Colonic mucosa (tissue), 4 donors: ENCODE measurements at regions of chr10 and their contacts with region 1.

Region 1: DNA sequence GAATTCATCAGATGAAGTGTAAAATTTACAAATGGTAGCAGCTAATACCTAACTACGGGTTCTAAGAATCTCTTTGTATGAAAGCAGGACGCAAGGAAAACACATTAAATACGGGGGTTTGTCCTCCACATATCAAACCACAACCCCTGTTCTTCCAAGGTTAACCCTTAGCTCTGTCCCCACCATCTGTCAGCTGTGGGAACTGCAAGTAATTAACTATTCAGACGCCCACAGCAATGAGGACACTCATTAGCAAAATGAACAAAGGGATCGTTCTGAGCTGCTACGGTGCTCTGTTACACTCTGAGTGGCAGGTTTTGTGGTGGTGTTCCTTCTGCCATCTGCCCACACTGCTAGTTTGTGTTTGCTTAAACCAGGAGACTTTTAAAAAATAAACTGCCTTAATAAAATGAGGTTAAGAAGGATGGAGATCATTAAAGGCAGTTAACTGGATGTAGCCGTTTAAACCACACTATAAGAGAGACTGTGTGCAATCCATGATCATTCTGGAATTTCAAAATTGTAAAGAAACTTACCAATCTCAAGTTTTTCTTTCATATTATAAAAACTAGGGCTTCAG is 51.4 kb downstream of the C10orf67 start:
- DNase-seq: peak; percentile 27
- H3K4me3 ChIP-seq: no peak overlapping the region
- H3K27ac ChIP-seq: no peak overlapping the region
- H3K4me1 ChIP-seq: no peaks in the 10 kb centered on the region
- H3K27me3 ChIP-seq: no peaks in the 10 kb centered on the region
- CTCF ChIP-seq: no peak

Region 2: GRCh38 chr10:23158370-23158769 is 134.9 kb before region 1 on chr10:
- intact Hi-C with region 1: loop called (anchors 5 kb)
- DNase-seq: peak; percentile 36
- H3K4me3 ChIP-seq: no peak overlapping the region
- H3K27ac ChIP-seq: no peak overlapping the region
- H3K4me1 ChIP-seq: no peaks in the 10 kb centered on the region
- H3K27me3 ChIP-seq: no peaks in the 10 kb centered on the region
- CTCF ChIP-seq: peak; percentile 86